ENCODE measurements at regions of chr10 and their contacts with region 1.

Region 1: DNA sequence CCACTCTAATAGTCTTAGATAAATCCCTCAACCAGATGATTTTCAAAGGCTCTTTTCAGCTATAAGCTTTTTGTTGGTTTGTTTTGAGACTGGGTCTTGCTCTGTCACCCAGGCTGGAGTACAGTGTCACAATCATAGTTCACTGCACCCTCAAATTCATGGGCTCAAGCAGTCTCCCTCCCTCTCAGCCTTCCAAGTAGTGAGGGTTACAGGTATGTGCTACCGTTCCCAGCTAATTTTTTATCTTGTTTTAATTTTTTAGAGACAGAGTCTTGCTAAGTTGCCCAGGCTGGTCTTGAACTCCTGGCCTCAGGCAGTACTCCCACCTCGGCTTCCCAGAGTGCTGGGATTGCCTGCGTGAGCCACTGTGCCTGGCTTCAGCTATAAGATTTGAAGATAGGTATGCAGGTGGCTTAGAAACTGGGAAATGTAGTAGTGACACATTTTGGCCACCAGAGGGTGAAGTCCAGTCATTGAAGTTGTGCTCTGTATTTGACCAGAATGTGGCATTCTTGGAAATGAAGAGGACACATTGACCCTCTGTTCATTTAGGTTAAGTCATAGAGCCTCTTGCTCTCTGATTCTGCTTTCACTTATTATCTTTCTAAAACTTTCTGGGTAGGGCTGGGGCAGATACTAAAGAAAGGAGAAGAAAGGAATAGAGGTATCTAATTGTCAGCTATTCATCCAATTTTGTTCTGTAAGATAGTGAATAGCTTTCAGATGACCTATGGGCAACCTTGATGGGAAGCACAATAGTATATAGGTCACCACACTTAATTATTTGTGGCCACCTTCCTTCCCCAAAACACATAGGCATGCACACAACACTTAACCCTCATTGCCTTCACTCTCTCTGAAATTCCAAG is 36.0 kb downstream of the R3HCC1L start:
- DNase-seq: peak; percentile 61
- H3K4me3 Mint-ChIP-seq: no peak overlapping the region
- H3K27ac Mint-ChIP-seq: peak overlapping the region; percentile 35
- H3K4me1 Mint-ChIP-seq: no peaks in the 10 kb centered on the region
- H3K27me3 Mint-ChIP-seq: no peaks in the 10 kb centered on the region
- CTCF ChIP-seq: peak; percentile 59

Region 2: GRCh38 chr10:98141484-98142073 is 28.9 kb before region 1 on chr10:
- CTCF ChIA-PET with region 1: interaction called, 28 read pairs
- POLR2A ChIA-PET with region 1: no interaction called
- intact Hi-C with region 1: no loop called
- DNase-seq: no peak
- H3K4me3 Mint-ChIP-seq: no peak overlapping the region
- H3K27ac Mint-ChIP-seq: no peak overlapping the region
- H3K4me1 Mint-ChIP-seq: peaks cover 30% of the 10 kb centered on the region
- H3K27me3 Mint-ChIP-seq: no peaks in the 10 kb centered on the region
- CTCF ChIP-seq: no peak

Region 3: GRCh38 chr10:98160026-98160425 is 10.5 kb before region 1 on chr10:
- CTCF ChIA-PET with region 1: interaction called, 24 read pairs
- POLR2A ChIA-PET with region 1: interaction called, 5 read pairs
- intact Hi-C with region 1: no loop called
- DNase-seq: no peak
- H3K4me3 Mint-ChIP-seq: no peak overlapping the region
- H3K27ac Mint-ChIP-seq: no peak overlapping the region
- H3K4me1 Mint-ChIP-seq: peaks cover 3% of the 10 kb centered on the region
- H3K27me3 Mint-ChIP-seq: no peaks in the 10 kb centered on the region
- CTCF ChIP-seq: no peak

Region 4: GRCh38 chr10:98195120-98195519 is 24.6 kb after region 1 on chr10:
- CTCF ChIA-PET with region 1: interaction called, 14 read pairs
- POLR2A ChIA-PET with region 1: no interaction called
- intact Hi-C with region 1: no loop called
- DNase-seq: no peak
- H3K4me3 Mint-ChIP-seq: no peak overlapping the region
- H3K27ac Mint-ChIP-seq: no peak overlapping the region
- H3K4me1 Mint-ChIP-seq: peaks cover 10% of the 10 kb centered on the region
- H3K27me3 Mint-ChIP-seq: no peaks in the 10 kb centered on the region
- CTCF ChIP-seq: no peak

Region 5: DNA sequence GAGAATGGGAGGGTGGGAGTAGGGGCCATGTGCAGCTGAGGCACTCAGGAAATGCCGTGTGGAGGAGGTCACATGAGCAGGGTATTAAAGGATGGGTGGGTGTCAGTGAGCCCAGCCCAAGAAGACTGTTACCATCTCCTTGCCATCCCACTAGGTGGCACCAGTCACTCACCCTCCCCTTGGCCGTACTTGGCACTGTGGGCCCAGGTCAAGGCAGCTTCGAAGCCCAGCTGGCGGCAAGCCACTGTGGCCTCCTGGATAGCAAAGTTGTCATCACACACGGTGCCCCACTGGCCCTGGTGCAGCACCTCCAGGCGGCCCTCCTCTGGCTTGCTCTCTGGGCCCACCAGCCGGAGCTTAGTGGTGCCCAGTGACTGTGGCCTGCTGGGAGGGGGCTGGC is 92.1 kb after region 1 on chr10:
- CTCF ChIA-PET with region 1: interaction called, 10 read pairs
- POLR2A ChIA-PET with region 1: no interaction called
- intact Hi-C with region 1: no loop called
- DNase-seq: peak; percentile 70
- H3K4me3 Mint-ChIP-seq: no peak overlapping the region
- H3K27ac Mint-ChIP-seq: no peak overlapping the region
- H3K4me1 Mint-ChIP-seq: peaks cover 6% of the 10 kb centered on the region
- H3K27me3 Mint-ChIP-seq: no peaks in the 10 kb centered on the region
- CTCF ChIP-seq: peak; percentile 55